Heart right ventricle (tissue), 16 donors: ENCODE measurements at regions of chr4 and their contacts with region 1.

Region 1: GRCh38 chr4:123396307-123397143 is at the start of gene SPRY1:
- DNase-seq: peak; percentile 78 to 95
- ATAC-seq: peak; percentile 83 to 91 (median 88)
- H3K4me3 ChIP-seq: peak within 1 kb of the TSS; percentile 65 to 85 (median 74)
- H3K27ac ChIP-seq: peak within 1 kb of the TSS; percentile 85 to 97 (median 94)
- H3K4me1 ChIP-seq: peaks cover 0 to 23% (median 6%) of the 10 kb centered on the region in 9 donors
- H3K27me3 ChIP-seq: peaks cover 0 to 8% (median 0%) of the 10 kb centered on the region in 7 donors
- CTCF ChIP-seq: no peak
- total RNA-seq, gene SPRY1: 21.6 to 61.7 (median 37.4) TPM

Region 2: GRCh38 chr4:122890142-122890769 is 506.3 kb before region 1 on chr4:
- intact Hi-C with region 1: no loop called
- DNase-seq: no peak
- ATAC-seq: peak in 2 of 8 donors; percentile 24 to 31
- H3K4me3 ChIP-seq: no peak overlapping the region
- H3K27ac ChIP-seq: peak overlapping the region in 6 of 10 donors; percentile 13 to 54 (median 30)
- H3K4me1 ChIP-seq: peaks cover 0 to 13% (median 2%) of the 10 kb centered on the region in 9 donors
- H3K27me3 ChIP-seq: no peaks in the 10 kb centered on the region
- CTCF ChIP-seq: no peak

Region 3: DNA sequence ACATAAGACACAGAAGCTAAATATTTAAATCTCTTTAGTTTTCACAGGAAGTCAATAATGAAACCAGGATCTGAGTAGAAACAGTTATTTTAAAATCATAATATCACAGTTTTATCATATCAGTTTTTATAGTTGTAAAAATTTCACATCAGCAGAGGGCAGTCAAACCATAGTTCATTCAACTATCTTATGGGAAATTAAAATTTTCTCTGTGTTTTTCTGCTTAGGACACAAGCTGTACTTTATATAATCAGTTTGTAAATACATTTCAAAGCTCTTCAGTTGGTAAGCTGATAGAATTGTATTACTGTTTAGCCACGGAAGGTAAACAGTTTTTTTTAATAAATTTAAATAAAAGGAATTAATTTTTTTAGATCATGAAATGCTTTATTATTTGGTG is 269.3 kb before region 1 on chr4:
- intact Hi-C with region 1: loop called in 4 of 10 experiments (anchors 5 to 10 kb)
- DNase-seq: no peak
- ATAC-seq: peak in 3 of 8 donors; percentile 46 to 55 (median 49)
- H3K4me3 ChIP-seq: no peak overlapping the region
- H3K27ac ChIP-seq: peak overlapping the region in 4 of 10 donors; percentile 28 to 36 (median 33)
- H3K4me1 ChIP-seq: peaks cover 0 to 25% (median 4%) of the 10 kb centered on the region in 9 donors
- H3K27me3 ChIP-seq: no peaks in the 10 kb centered on the region
- CTCF ChIP-seq: peak in 8 of 9 donors; percentile 31 to 69 (median 50)

Region 4: DNA sequence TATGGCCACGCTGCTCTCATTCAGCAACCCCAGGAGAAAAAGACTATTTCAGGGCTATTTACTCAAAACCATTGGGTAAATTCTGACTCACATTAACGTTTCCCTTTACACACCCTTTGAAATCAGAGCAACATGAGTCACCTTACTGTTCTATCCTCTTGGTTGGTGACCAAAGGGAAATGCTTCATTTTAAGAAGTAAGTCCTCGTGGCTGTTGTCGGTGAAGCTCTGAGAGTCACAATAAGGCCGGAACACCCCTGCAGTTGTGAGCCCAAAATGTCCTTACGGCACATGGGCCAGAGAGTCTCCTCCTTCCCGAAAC is 56.2 kb before region 1 on chr4:
- intact Hi-C with region 1: loop called in 2 of 10 experiments (anchors 2 to 5 kb)
- DNase-seq: no peak
- ATAC-seq: peak; percentile 19 to 86 (median 82)
- H3K4me3 ChIP-seq: no peak overlapping the region
- H3K27ac ChIP-seq: peak overlapping the region; percentile 63 to 87 (median 77)
- H3K4me1 ChIP-seq: peaks cover 3 to 60% (median 27%) of the 10 kb centered on the region in 9 donors
- H3K27me3 ChIP-seq: no peaks in the 10 kb centered on the region
- CTCF ChIP-seq: no peak

Region 5: GRCh38 chr4:123438031-123438430 is 41.5 kb after region 1 on chr4:
- intact Hi-C with region 1: no loop called
- DNase-seq: no peak
- ATAC-seq: peak in 1 of 8 donors; percentile 12
- H3K4me3 ChIP-seq: no peak overlapping the region
- H3K27ac ChIP-seq: no peak overlapping the region
- H3K4me1 ChIP-seq: peaks cover 0 to 13% (median 4%) of the 10 kb centered on the region in 9 donors
- H3K27me3 ChIP-seq: no peaks in the 10 kb centered on the region
- CTCF ChIP-seq: no peak

Region 6: GRCh38 chr4:123505095-123506010 is 108.8 kb after region 1 on chr4:
- intact Hi-C with region 1: loop called in 2 of 10 experiments (anchors 10 kb)
- DNase-seq: peak; percentile 52 to 56
- ATAC-seq: peak; percentile 60 to 86 (median 80)
- H3K4me3 ChIP-seq: peak overlapping the region; percentile 49 to 70 (median 62)
- H3K27ac ChIP-seq: peak overlapping the region; percentile 22 to 87 (median 76)
- H3K4me1 ChIP-seq: peaks cover 0 to 16% (median 5%) of the 10 kb centered on the region in 9 donors
- H3K27me3 ChIP-seq: peaks cover 0 to 17% (median 0%) of the 10 kb centered on the region in 7 donors
- CTCF ChIP-seq: no peak

Region 7: GRCh38 chr4:123661080-123661737 is 264.7 kb after region 1 on chr4:
- intact Hi-C with region 1: loop called in 5 of 10 experiments (anchors 5 to 10 kb)
- DNase-seq: no peak
- ATAC-seq: no peak
- H3K4me3 ChIP-seq: no peak overlapping the region
- H3K27ac ChIP-seq: no peak overlapping the region
- H3K4me1 ChIP-seq: no peaks in the 10 kb centered on the region
- H3K27me3 ChIP-seq: no peaks in the 10 kb centered on the region
- CTCF ChIP-seq: peak in 8 of 9 donors; percentile 34 to 70 (median 55)

Region 8: DNA sequence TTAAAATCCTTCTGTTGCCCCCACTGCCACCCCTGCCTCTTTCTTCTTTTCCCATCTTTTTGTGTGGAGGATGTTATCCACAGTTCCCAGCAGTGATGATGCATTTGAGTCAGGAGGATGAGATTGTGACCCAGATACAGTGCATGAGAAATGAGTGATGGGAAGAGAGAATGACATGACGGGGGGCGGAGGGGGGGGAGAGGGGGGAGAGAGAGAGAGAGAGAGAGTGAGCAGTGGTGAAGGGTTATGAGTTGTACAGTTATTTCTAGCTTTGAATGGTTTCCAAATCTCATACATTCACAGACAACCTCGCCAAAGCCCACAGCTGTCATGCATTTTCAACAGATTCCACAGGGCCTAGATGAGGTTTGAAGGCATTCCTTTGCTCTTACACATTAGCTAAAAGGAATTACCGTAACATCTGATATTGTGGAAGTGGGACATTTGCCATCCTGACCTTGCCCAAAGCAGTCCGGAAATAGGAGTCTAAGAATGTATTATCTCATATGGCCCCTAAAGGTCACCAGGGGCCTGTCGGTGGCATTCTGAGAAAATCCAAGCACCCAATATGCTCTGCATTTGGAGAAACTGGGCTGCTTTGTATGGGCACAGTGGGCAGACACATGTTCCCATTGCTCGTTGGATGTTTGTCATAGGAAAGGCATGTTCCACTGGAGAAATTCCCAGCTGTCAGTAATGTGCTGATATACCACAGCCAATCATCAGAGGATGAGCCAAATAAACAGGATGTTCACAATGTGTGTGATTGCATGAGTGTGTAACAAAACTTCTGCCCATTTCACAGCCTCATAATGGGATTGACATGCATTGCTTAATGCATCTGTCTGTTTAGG is 435.9 kb after region 1 on chr4:
- intact Hi-C with region 1: loop called in 2 of 10 experiments (anchors 5 to 10 kb)
- DNase-seq: peak in 1 of 2 donors; percentile 84
- ATAC-seq: peak; percentile 88 to 96 (median 93)
- H3K4me3 ChIP-seq: no peak overlapping the region
- H3K27ac ChIP-seq: peak overlapping the region; percentile 71 to 94 (median 90)
- H3K4me1 ChIP-seq: peaks cover 8 to 62% (median 38%) of the 10 kb centered on the region in 9 donors
- H3K27me3 ChIP-seq: no peaks in the 10 kb centered on the region
- CTCF ChIP-seq: no peak

Region 9: DNA sequence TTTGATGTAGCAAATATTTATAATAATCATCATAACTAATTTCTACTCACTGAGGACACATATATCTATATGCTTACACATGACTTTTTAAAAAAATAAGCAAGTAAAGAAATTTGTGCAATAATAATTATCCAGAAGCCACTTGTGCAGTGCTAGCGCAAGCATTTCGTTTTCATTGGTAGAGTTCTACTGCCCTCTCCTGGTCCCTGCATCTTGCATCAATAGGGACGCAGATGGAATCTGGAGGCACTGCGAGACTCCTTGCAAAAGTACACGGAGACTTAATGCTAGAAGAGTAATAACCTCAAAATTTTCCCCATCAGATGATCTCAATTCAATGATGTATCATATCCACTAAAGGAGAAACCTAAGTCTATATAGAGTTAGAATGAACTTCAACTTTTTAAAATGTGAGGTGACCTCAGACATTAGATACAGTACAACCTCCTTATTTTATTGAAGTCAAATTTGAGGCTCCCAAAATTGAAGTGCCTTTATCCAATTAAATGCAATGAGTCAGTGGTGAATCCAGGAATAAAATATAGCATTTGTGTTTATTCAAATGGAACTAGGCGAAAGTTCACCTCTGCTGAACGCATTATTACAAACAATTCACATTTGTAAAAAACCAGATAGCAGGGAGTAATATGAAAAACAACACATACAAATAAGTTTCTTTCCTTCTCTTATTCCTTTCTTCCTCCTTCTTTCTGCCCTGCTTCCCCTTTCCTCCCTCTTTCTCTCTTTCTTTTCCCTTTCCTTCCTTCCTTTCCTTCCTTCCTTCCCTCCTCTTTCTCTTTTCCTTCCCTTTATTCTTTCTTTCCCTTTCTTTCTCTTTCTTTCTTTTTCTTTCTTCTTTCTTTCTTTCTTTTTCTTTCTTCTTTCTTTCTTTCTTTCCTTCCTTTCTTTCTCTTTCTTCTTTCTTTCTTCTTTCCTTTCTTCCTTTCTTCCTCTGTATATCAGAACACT is 866.0 kb after region 1 on chr4:
- intact Hi-C with region 1: loop called in 1 of 10 experiments (anchors 10 kb)
- DNase-seq: peak in 1 of 2 donors; percentile 73
- ATAC-seq: peak; percentile 75 to 90 (median 84)
- H3K4me3 ChIP-seq: no peak overlapping the region
- H3K27ac ChIP-seq: peak overlapping the region in 1 of 10 donors; percentile 29
- H3K4me1 ChIP-seq: peaks cover 0 to 6% (median 0%) of the 10 kb centered on the region in 9 donors
- H3K27me3 ChIP-seq: no peaks in the 10 kb centered on the region
- CTCF ChIP-seq: peak; percentile 71 to 94 (median 85)